ENCODE measurements at regions of chr11 and their contacts with region 1.

Region 1: DNA sequence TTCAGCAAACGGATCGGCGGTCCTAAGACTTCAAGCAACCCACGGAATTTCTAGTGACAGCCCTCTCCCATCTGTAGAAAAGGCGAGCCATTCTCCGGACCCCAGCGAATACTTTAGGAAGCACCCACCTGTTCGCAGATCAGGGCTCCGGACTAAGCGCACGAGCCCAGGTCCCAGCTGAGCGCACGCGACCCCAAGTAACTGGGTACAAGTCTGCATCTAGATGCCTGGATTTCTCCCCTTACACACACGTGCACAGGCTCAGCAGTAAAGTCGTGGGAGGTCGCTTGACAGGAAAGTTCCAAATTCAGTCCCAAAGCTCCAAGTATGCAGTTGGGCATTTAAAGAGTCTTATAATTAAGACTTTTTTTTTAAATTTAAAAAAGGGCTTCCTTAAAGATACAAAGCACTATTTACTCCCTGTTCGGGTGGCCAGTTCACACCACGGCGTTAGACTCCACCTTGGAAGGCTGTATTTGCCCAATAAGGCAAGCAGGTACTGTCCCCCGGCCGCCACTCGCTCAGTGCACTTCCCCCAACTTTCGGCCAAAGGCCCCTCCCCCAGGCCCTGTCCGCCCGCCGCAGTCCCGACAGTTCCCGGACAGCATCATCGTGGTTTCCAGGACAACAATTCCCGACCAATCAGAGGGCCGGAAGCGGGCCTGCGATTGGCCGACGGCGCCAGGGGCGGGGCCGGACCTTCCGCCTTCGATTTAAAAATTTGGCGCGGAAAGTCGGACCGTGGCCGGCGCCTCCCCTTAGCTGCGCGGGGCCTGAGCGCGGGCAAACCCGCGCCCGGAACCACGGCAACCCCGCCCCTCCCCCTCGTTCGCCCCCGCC is at the start of gene E2F8:
- DNase-seq: peak; percentile 93
- H3K4me3 Mint-ChIP-seq: peak within 1 kb of the TSS; percentile 94
- H3K27ac Mint-ChIP-seq: peak within 1 kb of the TSS; percentile 73
- H3K4me1 Mint-ChIP-seq: peaks cover 38% of the 10 kb centered on the region
- H3K27me3 Mint-ChIP-seq: peaks cover 5% of the 10 kb centered on the region
- total RNA-seq, gene E2F8: 24.0 TPM in 2 replicates

Region 2: DNA sequence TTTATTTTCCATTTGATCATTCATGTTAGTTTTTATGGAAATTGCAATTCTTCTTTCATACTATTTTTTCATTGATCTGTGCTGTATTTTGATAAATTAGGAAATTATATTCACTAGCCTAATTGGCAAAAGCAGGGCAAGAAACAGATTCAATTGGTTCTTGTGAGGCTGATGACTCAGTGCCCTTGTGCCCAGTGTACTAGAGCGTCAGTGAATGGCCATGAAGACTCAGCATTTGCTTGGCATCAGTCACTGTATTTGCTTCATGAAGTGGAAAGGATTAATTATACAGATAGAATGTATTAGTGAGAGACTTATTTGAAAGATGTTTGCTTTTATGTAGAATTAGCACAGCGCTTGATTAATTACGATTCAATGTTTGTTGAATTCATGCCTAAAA is 333.2 kb before region 1 on chr11:
- intact Hi-C with region 1: no loop called
- DNase-seq: no peak
- H3K4me3 Mint-ChIP-seq: no peak overlapping the region
- H3K27ac Mint-ChIP-seq: no peak overlapping the region
- H3K4me1 Mint-ChIP-seq: no peaks in the 10 kb centered on the region
- H3K27me3 Mint-ChIP-seq: peaks cover 7% of the 10 kb centered on the region

Region 3: DNA sequence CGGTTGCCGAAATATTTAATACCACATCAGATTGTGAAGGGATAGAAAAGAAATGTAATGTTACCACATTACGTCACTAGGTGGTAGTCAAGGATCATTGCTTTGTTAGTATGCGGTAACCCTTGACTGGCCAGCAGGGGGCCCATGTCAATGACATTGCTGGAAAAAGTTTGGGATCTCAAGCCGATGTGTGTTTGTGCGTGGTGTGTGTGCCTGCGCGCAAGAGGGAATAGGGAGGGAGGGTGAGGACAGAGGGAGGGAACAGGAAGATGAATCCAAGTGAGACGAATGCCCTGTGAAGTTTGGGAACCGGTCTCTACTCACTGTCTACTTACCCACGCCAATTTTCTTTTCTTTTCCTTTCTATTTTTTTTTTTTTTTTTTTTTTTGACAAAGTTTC is 169.4 kb before region 1 on chr11:
- intact Hi-C with region 1: loop called (anchors 5 kb)
- DNase-seq: peak; percentile 26
- H3K4me3 Mint-ChIP-seq: peak overlapping the region; percentile 22
- H3K27ac Mint-ChIP-seq: no peak overlapping the region
- H3K4me1 Mint-ChIP-seq: peaks cover 2% of the 10 kb centered on the region
- H3K27me3 Mint-ChIP-seq: peaks cover 21% of the 10 kb centered on the region

Region 4: GRCh38 chr11:19116971-19117750 is 123.5 kb before region 1 on chr11 and contains the start of gene ZDHHC13:
- intact Hi-C with region 1: loop called (anchors 2 kb)
- DNase-seq: peak; percentile 94
- H3K4me3 Mint-ChIP-seq: peak within 1 kb of the TSS; percentile 93
- H3K27ac Mint-ChIP-seq: peak within 1 kb of the TSS; percentile 88
- H3K4me1 Mint-ChIP-seq: peaks cover 48% of the 10 kb centered on the region
- H3K27me3 Mint-ChIP-seq: peaks cover 11% of the 10 kb centered on the region
- total RNA-seq, gene ZDHHC13: 25.4 and 27.8 TPM in 2 replicates

Region 5: DNA sequence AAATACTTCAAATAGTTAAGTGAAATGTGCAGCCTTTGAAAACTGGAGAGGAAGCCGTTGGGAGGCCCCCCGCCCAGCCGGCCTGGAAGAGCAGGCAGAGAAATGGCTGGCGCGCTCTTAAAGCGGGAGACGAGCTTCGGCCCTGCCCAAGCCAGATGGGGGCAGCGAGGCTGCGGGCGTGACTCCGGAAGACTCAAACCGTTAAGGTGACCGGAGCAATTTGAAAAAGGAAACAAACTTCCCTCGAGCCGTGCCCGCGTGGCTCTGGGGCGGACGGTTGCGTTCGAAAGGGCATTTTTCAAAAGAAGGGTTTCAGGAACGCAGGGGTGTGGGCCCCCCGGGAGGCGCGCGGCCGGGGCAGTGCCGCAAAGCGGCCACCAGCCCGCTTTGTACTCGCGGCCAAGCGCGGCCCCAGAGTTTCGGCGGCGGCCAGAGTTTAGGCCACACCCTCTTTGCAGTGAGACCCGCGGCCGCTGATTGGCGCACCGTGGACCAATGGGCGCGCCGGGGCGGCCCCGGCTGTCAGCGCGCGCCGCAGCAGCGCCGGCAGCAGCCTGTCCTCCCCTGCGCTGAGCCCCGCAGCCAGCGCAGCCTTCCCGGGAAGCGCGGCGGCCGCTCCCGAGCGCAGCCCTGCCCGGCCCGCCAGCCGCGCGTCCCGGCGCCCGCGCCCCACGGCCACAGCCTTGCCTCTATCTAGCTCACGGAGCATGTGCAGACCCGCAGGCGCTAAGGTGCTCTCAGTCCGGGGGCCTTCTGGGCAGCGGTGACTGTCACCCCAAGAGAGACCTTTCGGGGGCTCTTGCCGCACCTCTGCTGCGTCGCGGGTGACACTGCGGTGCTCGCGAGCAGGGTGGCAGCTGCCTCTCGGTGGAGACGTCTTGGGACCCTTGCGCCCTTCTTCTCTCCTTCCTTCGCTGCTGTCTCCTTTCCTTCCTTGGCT is 471.9 kb after region 1 on chr11 and contains the start of gene NAV2:
- intact Hi-C with region 1: loop called (anchors 5 kb)
- DNase-seq: peak; percentile 76
- H3K4me3 Mint-ChIP-seq: peak within 1 kb of the TSS; percentile 86
- H3K27ac Mint-ChIP-seq: peak within 1 kb of the TSS; percentile 84
- H3K4me1 Mint-ChIP-seq: peaks cover 20% of the 10 kb centered on the region
- H3K27me3 Mint-ChIP-seq: peaks cover 53% of the 10 kb centered on the region
- total RNA-seq, gene NAV2: 0.02 and 0.39 TPM in 2 replicates

Measured in activated T-helper 2 cell treated with anti-CD3 and anti-CD28 coated beads, Interferon-gamma antibody, Interleukin-2, Interleukin-4, amounts not matched to agents 10 μg/mL and 5 μg/mL and 100 μg/mL, durations not matched to agents 14 hours and 24 hours and 36 hours (primary cell).